PC-3 (cell line): ENCODE measurements at regions of chr1 and their contacts with region 1.

Region 1: GRCh38 chr1:87805666-87806378 is 477.1 kb downstream of the LMO4 start:
- DNase-seq: peak; percentile 91
- ATAC-seq: peak; percentile 96
- H3K4me3 ChIP-seq: peak overlapping the region; percentile 50
- H3K27ac ChIP-seq: peak overlapping the region; percentile 23
- H3K4me1 ChIP-seq: peaks cover 22% of the 10 kb centered on the region
- H3K27me3 ChIP-seq: no peaks in the 10 kb centered on the region
- CTCF ChIP-seq: no peak

Region 2: GRCh38 chr1:87718241-87718950 is 87.4 kb before region 1 on chr1:
- CTCF ChIA-PET with region 1: no interaction called
- POLR2A ChIA-PET with region 1: no interaction called
- intact Hi-C with region 1: no loop called
- DNase-seq: peak; percentile 38
- ATAC-seq: peak; percentile 72
- H3K4me3 ChIP-seq: no peak overlapping the region
- H3K27ac ChIP-seq: no peak overlapping the region
- H3K4me1 ChIP-seq: peaks cover 16% of the 10 kb centered on the region; the same call in 1 of the 2 replicates
- H3K27me3 ChIP-seq: no peaks in the 10 kb centered on the region
- CTCF ChIP-seq: no peak

Region 3: GRCh38 chr1:87757676-87758075 is 48.1 kb before region 1 on chr1:
- CTCF ChIA-PET with region 1: no interaction called
- POLR2A ChIA-PET with region 1: no interaction called
- intact Hi-C with region 1: no loop called
- DNase-seq: no peak
- ATAC-seq: no peak
- H3K4me3 ChIP-seq: no peak overlapping the region
- H3K27ac ChIP-seq: no peak overlapping the region
- H3K4me1 ChIP-seq: 0 out of 2 replicates have a peak, but pooled peaks cover 6% of the 10 kb centered on the region
- H3K27me3 ChIP-seq: no peaks in the 10 kb centered on the region
- CTCF ChIP-seq: no peak

Region 4: DNA sequence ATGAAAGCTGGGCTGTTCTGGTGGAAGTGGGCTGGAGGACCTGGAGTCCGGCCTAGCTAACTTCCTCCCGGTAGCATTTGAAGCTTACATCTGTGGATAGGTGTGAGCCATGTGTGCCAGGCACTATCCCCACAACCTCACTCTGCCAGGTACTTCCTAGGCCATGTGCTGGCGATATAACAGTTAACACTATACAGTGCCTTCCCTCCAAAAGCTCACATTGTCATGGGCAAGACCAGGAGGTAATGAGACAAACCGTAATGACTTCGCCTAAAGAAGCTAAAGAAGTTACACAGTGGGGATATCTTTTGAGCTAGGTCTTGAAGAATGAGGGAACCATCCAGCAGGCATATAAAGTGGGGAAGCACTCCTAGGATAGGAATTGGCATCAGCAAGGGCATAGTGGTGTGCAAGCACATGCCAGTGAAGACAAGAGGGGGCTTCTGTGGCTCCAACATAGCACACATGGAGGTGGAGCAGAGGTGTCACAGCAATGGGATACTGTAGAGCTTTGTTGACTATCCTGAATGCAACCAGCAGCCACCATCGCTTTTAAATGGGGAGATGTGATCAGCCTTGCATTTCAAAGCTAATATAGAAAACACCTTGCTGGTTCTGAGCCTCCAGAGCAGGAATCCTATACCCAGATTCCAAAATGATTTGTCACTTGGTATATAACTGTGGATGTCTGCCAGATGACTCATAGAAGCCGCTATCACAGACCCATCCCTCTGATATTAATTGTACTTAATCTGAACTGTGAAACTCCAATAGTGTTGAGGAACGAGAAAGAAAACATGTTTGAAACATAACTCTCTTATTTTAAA is 10.8 kb before region 1 on chr1:
- CTCF ChIA-PET with region 1: no interaction called
- POLR2A ChIA-PET with region 1: no interaction called
- intact Hi-C with region 1: loop called (anchors 1 kb)
- DNase-seq: peak; percentile 94
- ATAC-seq: peak; percentile 97
- H3K4me3 ChIP-seq: peak overlapping the region; percentile 22; the same call in 1 of the 2 replicates
- H3K27ac ChIP-seq: no peak overlapping the region
- H3K4me1 ChIP-seq: peaks cover 22% of the 10 kb centered on the region
- H3K27me3 ChIP-seq: no peaks in the 10 kb centered on the region
- CTCF ChIP-seq: no peak

Region 5: DNA sequence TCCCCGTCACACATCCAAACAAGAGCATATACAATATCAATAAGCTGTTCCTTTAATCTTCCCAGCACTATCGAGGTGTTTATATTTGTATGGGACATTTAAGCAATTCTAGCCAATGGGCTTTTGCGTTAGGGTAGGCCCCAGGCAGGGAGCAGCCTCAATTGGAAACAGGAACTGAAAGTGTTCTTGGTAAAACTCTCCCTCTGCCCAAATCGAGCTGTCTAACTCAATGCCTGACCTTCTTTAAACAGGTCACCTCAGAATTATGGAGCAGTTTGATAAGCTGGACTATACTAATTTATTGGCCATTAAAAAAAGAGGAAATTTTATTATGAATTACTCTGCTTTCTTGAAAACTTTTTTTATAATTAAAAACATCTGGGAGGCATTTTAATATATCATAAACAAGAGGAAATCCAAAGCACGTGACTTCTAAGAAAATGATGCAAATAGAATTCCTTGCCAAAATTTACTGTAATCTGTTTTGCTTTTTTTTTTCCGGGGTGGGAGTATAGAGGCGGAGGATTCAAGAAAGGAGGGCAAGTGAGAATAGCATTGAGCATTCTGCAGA is 20.9 kb after region 1 on chr1:
- CTCF ChIA-PET with region 1: no interaction called
- POLR2A ChIA-PET with region 1: no interaction called
- intact Hi-C with region 1: no loop called
- DNase-seq: no peak
- ATAC-seq: no peak
- H3K4me3 ChIP-seq: no peak overlapping the region
- H3K27ac ChIP-seq: no peak overlapping the region
- H3K4me1 ChIP-seq: no peaks in the 10 kb centered on the region
- H3K27me3 ChIP-seq: no peaks in the 10 kb centered on the region
- CTCF ChIP-seq: no peak

Region 6: GRCh38 chr1:87869567-87869966 is 63.7 kb after region 1 on chr1:
- CTCF ChIA-PET with region 1: no interaction called
- POLR2A ChIA-PET with region 1: no interaction called
- intact Hi-C with region 1: loop called (anchors 5 kb)
- DNase-seq: peak; percentile 91
- ATAC-seq: peak; percentile 97
- H3K4me3 ChIP-seq: 0 out of 2 replicates have a peak overlapping the region, but pooled peaks have one; percentile 17
- H3K27ac ChIP-seq: peak overlapping the region; percentile 91
- H3K4me1 ChIP-seq: peaks cover 29% of the 10 kb centered on the region
- H3K27me3 ChIP-seq: no peaks in the 10 kb centered on the region
- CTCF ChIP-seq: no peak